Common myeloid progenitor, CD34-positive (primary cell): ENCODE measurements at regions of chr11 and their contacts with region 1.

Region 1: GRCh38 chr11:79493555-79494171 is 52.8 kb upstream of the TENM4 start:
- DNase-seq: peak; percentile 26 to 54 (median 40)
- H3K4me3 ChIP-seq: no peak overlapping the region
- H3K27ac ChIP-seq: no peak overlapping the region
- H3K4me1 ChIP-seq: no peaks in the 10 kb centered on the region
- H3K27me3 ChIP-seq: peaks cover 0 to 4% (median 0%) of the 10 kb centered on the region in 5 experiments

Region 2: DNA sequence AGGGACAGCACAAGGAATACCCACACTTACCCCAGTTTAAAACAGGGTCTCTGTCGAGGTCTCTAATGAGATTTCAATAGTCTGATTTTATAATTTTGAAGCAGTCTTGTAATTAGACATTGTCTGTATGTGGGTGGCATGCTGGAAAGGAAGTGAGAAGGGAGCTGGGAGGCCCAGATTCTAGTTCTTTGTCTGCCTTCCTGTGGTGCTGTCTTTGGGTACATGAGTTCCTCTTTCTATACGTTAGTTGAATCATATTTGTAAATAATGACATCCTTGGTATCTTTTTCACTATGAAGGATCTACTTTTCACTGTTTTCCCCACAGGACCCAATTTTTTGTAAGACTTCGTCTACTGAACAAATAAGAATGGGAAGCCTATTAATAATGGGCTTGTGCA is 10.9 kb before region 1 on chr11:
- CTCF ChIA-PET with region 1: interaction called, 18 read pairs
- POLR2A ChIA-PET with region 1: no interaction called
- DNase-seq: peak in 2 of 3 donors; percentile 14 to 30
- H3K4me3 ChIP-seq: no peak overlapping the region
- H3K27ac ChIP-seq: no peak overlapping the region
- H3K4me1 ChIP-seq: no peaks in the 10 kb centered on the region
- H3K27me3 ChIP-seq: peaks cover 0 to 10% (median 0%) of the 10 kb centered on the region in 5 experiments

Region 3: DNA sequence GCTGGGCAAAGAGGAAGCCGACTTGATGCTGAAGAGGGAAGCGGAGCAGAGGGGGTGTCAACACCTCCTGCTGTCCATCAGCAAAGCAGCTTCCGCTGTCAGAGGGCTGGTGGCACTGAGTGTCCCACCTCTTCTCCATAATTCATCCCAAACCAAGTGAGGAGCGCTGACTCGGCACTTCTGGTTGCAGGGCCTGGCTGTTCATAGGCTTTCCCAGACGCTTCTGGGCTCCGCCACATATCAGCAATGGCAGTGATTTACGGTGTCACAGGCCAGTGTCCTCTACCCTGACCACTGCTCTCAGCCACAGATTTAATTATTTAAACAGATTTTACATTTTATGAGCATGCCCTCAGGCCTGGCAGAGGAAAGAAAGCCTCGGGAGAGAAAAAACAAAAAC is 17.3 kb after region 1 on chr11:
- CTCF ChIA-PET with region 1: no interaction called
- POLR2A ChIA-PET with region 1: no interaction called
- DNase-seq: no peak
- H3K4me3 ChIP-seq: no peak overlapping the region
- H3K27ac ChIP-seq: no peak overlapping the region
- H3K4me1 ChIP-seq: no peaks in the 10 kb centered on the region
- H3K27me3 ChIP-seq: peaks cover 0 to 22% (median 3%) of the 10 kb centered on the region in 5 experiments